ENCODE measurements at regions of chr19 and their contacts with region 1.

Region 1: DNA sequence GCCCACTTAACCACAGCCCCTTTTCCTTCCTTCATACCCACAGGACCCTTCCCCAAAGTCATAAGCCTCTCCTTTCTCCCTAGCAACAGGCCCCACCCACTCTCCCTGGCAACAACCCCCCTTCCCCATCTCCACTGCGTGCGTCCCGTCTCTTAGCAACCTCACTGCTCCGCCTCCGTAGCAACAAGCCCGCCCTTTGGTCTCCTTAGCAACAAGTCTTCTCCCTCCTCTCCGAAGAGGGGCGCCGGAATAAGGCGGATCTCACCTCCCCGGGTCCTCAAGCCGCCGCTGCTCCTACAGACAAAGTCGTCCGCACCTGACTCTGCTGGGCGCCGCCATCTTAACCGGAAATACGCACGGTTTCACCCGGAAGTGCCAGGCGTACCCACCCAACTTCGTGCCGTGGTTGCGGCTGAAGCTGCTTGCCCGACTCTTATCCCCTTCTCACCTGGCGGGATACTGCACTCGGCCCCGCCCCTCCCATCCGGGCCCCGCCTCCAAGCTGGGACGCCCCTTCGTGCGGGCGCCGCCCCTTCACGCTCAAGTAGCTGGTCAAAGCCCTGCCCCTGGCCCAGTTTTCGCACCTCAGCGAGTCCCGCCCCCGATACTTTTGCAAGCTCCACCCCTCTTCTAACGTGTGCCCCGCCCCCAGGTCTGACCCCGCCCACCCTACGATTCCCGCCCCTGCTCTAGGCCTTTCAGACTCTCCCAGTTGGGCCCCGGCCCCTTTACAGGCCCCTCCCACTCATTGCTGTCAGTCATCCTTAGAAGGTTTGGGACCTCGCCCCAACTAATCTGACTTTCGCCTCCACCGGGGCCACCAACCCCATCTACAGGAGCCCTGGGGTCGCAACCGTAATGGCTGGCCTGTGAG is at the start of gene HSPBP1:
- DNase-seq: peak; percentile 98
- H3K4me3 ChIP-seq: peak within 1 kb of the TSS; percentile 95
- H3K27ac ChIP-seq: peak within 1 kb of the TSS; percentile 93
- H3K4me1 ChIP-seq: peaks cover 78% of the 10 kb centered on the region
- CTCF ChIP-seq: no peak
- total RNA-seq, gene HSPBP1: 41.3 and 50.5 TPM in 2 replicates

Region 2: DNA sequence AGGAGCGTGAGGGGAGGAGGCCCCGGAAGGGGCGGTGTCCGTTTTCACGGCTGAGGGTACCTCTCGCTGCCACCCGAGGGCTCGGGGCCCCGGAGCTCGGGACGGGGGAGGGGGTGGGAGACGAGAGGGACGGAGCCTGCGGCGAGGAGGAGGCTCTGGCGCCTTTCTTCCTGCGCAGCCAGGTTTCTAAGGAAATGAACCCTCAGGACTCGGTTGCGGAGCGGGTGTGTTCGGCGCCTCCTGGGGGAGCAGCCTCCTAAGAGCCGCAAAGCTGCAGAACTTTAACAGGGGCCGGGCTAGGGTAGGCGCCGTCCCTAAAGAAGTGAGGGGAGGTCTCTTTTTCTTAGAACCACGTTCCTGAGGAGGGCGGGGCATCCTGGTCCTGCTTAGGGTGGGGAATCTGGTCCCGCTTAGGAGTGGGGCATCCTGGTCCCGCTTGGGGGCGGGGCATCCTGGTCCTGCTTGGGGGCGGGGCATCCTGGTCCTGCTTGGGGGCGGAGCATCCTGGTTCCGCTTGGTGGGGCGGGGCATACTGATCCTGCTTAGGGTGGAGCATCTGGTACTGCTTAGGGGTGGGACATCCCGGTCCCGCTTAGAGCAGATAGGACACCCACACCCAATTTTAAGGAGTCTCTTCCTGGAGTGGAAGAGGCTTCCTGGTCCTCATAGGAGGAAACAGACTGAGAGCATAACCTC is 106.1 kb before region 1 on chr19:
- CTCF ChIA-PET with region 1: no interaction called
- POLR2A ChIA-PET with region 1: no interaction called
- intact Hi-C with region 1: loop called (anchors 5 kb)
- DNase-seq: peak; percentile 84
- H3K4me3 ChIP-seq: peak overlapping the region; percentile 70
- H3K27ac ChIP-seq: peak overlapping the region; percentile 37
- H3K4me1 ChIP-seq: peaks cover 31% of the 10 kb centered on the region
- CTCF ChIP-seq: peak; percentile 46; the same call in 1 of the 2 replicates

Region 3: DNA sequence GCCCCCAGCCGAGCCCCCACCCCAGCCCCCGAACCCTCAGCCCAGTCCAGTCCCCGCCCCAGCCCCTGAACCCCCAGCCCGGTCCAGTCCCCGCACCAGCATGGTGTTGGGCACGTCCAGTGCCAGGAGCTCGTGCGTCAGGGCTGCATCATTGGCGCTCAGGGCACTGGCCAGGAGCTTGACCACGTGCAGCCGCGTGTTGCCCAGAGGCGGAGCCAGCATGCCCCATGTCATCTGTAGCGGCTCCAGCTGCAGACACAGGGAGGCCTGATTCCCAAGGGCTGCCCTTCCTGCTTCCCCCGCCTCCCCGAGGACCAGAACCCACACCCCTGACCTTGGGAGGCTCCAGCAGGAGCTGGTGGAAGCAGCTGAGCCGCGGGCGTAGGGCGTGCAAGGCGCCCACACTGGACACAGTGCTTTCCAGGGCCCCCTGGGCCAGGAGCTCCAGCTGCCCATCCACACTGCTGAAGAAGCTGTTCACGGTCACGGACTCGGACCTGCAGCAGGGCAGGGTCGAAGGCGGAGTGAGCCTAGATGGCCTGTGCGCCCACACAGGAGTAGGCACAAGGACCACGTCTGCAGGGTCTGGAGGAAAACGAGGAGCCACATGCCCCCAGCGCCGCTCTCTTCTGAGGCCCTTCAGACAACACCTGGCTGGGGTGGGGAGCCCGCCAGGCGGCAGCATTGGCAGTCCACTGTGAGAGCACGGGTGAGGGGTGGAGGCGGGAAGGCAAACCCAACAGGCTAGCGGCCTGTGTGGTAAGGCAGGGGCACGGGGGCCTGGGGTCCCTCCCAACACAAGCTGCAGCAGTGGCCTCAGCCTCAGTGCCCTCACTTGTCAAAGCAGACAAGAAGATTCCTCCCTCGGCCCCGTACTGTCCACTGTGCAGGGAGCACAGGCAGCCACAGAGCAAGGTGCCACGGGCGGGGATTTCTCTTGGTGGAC is 38.6 kb before region 1 on chr19:
- CTCF ChIA-PET with region 1: no interaction called
- POLR2A ChIA-PET with region 1: no interaction called
- intact Hi-C with region 1: no loop called
- DNase-seq: no peak
- H3K4me3 ChIP-seq: no peak overlapping the region
- H3K27ac ChIP-seq: no peak overlapping the region
- H3K4me1 ChIP-seq: no peaks in the 10 kb centered on the region
- CTCF ChIP-seq: no peak

Region 4: GRCh38 chr19:55407800-55408532 is 128.0 kb after region 1 on chr19:
- CTCF ChIA-PET with region 1: no interaction called
- POLR2A ChIA-PET with region 1: no interaction called
- intact Hi-C with region 1: loop called (anchors 2 kb)
- DNase-seq: peak; percentile 100
- H3K4me3 ChIP-seq: peak overlapping the region; percentile 100
- H3K27ac ChIP-seq: peak overlapping the region; percentile 92
- H3K4me1 ChIP-seq: peaks cover 32% of the 10 kb centered on the region
- CTCF ChIP-seq: no peak

Measured in OCI-LY7 (cell line).